Motor neuron (in vitro differentiated cells): ENCODE measurements at regions of chr9 and their contacts with region 1.

Region 1: GRCh38 chr9:124771021-124771866 is at the start of gene NR6A1:
- ATAC-seq: peak; percentile 88 to 94 (median 92)
- H3K4me3 ChIP-seq: peak within 1 kb of the TSS; percentile 76 to 96 (median 92)
- H3K27ac ChIP-seq: peak within 1 kb of the TSS; percentile 76 to 90
- H3K4me1 ChIP-seq: peaks cover 7 to 28% of the 10 kb centered on the region in 2 donors
- total RNA-seq, gene NR6A1: 0.46 to 29.0 (median 3.7) TPM

Region 2: GRCh38 chr9:124839612-124840299 is 68.5 kb after region 1 on chr9:
- in situ Hi-C with region 1: loop called in 2 of 9 experiments (anchors 10 kb)
- ATAC-seq: peak in 7 of 8 experiments; percentile 30 to 64 (median 35)
- H3K4me3 ChIP-seq: no peak overlapping the region
- H3K27ac ChIP-seq: no peak overlapping the region
- H3K4me1 ChIP-seq: peaks cover 0 to 4% of the 10 kb centered on the region in 2 donors

Region 3: DNA sequence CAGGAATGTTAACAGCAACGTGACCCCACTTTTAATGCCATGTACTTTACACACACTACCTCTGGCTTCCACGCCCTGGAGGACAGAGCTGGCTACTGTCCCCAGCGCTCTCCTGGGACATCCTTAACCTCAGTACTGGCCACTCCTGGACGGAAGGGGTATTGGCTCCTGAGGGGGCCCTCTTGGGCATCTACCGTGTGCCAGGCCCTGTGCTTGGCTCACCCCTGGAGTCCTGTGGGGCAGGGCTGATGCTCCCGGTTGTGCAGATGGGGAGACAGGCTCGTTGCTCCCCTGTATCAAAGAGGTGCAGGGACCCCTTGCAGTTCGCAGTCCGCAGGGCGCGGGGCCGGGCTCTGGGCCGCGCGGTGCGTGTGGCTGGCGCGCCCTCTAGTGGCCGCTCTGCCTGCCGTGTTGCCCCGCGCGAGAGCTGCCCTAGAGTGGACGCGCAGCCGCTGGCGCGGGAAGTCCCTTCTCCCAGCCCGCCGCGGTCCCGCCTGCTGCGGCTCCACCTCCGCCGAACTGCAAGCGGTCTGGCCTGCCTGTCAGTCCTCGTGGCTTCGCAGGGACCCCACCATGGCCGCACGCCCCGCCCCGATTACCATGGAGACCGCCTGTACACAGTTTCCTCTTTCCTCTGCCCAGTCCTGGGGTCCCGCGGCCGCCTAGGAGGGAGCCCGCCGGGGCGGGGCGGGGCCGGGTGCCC is 81.7 kb after region 1 on chr9 and contains the start of gene WDR38:
- in situ Hi-C with region 1: loop called in 7 of 9 experiments (anchors 5 to 25 kb)
- ATAC-seq: peak; percentile 76 to 93 (median 87)
- H3K4me3 ChIP-seq: peak within 1 kb of the TSS; percentile 20 to 36 (median 27)
- H3K27ac ChIP-seq: no peak within 1 kb of the TSS
- H3K4me1 ChIP-seq: peaks cover 0 to 9% of the 10 kb centered on the region in 2 donors
- total RNA-seq, gene WDR38: 0.33 to 11.5 (median 0.50) TPM in 7 of 8 experiments, not detected in the other

Region 4: GRCh38 chr9:124861342-124862229 is 90.3 kb after region 1 on chr9 and contains the starts of genes ARPC5L and RPL35:
- in situ Hi-C with region 1: loop called in 3 of 9 experiments (anchors 10 to 25 kb)
- ATAC-seq: peak; percentile 86 to 97 (median 95)
- H3K4me3 ChIP-seq: peak within 1 kb of the TSS; percentile 74 to 93 (median 85)
- H3K27ac ChIP-seq: peak within 1 kb of the TSS; percentile 83 to 93
- H3K4me1 ChIP-seq: peaks cover 9 to 15% of the 10 kb centered on the region in 2 donors
- total RNA-seq, gene ARPC5L: 13.3 to 51.0 (median 33.3) TPM
- total RNA-seq, gene RPL35: 2,145 to 3,545 (median 3,108) TPM

Region 5: DNA sequence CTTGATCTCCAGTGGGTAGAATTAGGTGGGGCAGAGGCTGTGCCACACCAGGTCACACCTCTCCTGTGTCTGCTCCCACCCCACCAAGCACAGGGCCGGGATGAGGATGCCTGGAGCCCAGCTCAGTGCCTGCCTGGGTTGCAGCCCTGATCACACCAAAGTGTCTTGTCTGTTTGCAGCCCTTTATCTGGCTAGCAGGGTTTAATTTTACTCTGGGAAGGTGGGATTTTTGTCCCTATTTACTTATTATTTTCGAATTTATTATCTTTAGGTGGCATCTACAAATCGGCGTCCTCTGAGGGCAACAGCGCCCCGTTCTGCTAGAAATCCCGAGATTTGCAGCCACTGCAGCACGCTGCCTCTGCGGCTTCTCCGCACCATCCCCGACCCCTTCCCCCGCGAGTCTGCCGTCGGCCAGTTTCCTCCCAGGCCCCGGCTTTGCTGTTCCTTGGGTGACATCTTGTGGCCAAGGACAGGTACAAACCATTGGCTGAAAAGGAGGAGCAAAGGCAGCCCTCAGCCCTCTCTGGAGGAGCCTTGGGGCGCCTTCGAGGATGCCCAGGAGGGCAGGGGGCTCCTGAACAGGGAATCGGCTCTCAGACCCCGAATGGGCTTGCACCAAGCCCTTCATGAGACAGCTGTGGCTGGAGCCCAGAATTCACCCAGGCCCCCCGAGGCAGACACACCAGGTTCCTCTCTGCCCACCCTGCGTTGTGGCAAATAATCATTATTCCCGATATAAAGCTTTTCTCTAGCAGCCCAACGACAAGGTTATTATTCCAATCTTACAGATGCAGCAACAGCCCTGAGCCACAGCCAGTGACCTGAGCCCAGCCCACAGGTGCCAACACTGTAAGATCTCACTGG is 603.4 kb after region 1 on chr9:
- in situ Hi-C with region 1: loop called in 1 of 9 experiments (anchors 10 kb)
- ATAC-seq: peak; percentile 68 to 92 (median 86)
- H3K4me3 ChIP-seq: peak overlapping the region in 4 of 5 donors; percentile 0 to 24 (median 16)
- H3K27ac ChIP-seq: no peak overlapping the region
- H3K4me1 ChIP-seq: peaks cover 20 to 24% of the 10 kb centered on the region in 2 donors